Right ventricle myocardium inferior (tissue), 1 donor: ENCODE measurements at regions of chr15 and their contacts with region 1.

Region 1: GRCh38 chr15:91890614-91891013 is 37.1 kb downstream of the SLCO3A1 start:
- DNase-seq: no peak
- ATAC-seq: no peak

Region 2: DNA sequence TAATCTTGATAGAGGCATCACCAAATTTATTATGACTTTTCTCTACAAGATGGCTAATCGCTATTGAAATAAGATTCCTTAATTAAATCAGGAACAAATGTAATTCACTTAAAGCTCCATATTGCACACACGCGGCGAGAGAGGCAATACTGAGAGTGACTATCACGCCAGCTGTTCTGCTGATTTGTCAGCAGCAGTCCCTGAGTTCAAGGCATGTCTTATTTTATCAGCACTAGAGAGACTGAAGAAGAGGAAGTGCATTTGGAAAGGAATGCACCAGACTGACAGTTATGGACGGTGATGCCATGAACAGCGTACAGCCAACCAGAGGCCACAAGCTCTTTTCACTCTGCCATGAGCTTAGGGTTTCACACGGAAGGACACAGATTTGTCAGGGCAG is 120.7 kb before region 1 on chr15:
- intact Hi-C with region 1: no loop called
- DNase-seq: no peak
- ATAC-seq: no peak

Region 3: DNA sequence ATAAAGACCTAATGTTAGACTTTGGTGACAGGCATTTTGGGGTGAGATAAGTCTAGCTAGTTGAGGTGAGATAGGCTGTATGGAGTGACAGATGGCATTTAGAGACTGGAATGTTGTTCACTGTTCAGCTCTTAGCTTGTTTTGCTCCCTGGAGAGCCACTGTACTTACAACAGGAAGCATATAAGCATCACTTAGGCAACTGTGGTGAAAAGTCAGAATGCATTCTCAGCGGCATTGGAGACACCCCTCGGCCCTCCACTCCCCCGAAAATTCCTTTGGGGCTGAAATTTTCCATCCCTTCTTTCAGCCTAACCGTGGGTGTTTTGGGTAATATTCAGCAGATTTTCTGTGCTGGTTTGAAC is 36.3 kb after region 1 on chr15:
- intact Hi-C with region 1: loop called (anchors 5 kb)
- DNase-seq: no peak
- ATAC-seq: peak; percentile 47